Caco-2 (cell line): ENCODE measurements at regions of chr12 and their contacts with region 1.

Region 1: GRCh38 chr12:95762123-95762785 is 28.3 kb downstream of the NTN4 start:
- DNase-seq: peak; percentile 68 to 74
- H3K4me3 ChIP-seq: no peak overlapping the region
- H3K4me3 Mint-ChIP-seq: peak overlapping the region; percentile 48
- H3K27ac Mint-ChIP-seq: peak overlapping the region; percentile 71
- H3K4me1 ChIP-seq: peaks cover 72% of the 10 kb centered on the region
- H3K4me1 Mint-ChIP-seq: peaks cover 53% of the 10 kb centered on the region
- H3K27me3 ChIP-seq: no peaks in the 10 kb centered on the region
- H3K27me3 Mint-ChIP-seq: no peaks in the 10 kb centered on the region
- CTCF ChIP-seq: no peak

Region 2: DNA sequence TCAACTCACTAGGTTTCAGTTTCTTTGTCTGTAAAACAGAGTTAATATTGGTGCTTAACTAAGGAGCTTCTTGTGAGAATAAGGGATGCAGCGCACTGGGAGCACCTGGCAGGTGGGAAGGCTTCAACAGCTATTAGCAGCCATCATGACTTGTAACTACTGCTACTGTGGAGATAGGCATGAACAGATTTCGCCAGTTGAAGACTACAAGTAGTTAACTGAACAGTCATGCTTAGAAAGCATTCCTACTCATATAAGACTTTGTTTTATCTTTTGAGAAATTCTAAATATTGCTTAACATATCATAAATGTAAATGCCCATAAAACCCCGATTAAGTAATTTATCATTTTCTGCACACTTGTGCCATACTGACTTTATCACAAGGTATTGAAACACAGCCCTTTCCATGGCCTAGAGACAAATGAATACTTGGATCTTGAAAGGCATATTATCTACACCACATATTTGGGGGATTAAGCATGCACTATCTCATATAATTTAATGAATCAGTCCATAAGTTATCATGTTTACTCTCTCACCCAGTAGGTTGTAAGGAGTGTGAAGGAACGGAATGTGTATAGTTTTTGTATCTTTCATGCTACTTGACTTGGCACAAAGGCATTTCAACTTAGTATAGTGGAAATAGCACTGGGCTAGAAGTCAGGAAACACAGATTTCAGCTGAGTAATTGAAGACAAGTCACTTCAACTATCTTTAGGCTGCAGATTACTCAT is 12.2 kb after region 1 on chr12:
- CTCF ChIA-PET with region 1: no interaction called
- POLR2A ChIA-PET with region 1: no interaction called
- intact Hi-C with region 1: loop called (anchors 1 kb)
- DNase-seq: peak in 1 of 2 experiments; percentile 16
- H3K4me3 ChIP-seq: no peak overlapping the region
- H3K4me3 Mint-ChIP-seq: no peak overlapping the region
- H3K27ac Mint-ChIP-seq: no peak overlapping the region
- H3K4me1 ChIP-seq: peaks cover 29% of the 10 kb centered on the region
- H3K4me1 Mint-ChIP-seq: peaks cover 25% of the 10 kb centered on the region
- H3K27me3 ChIP-seq: no peaks in the 10 kb centered on the region
- H3K27me3 Mint-ChIP-seq: no peaks in the 10 kb centered on the region
- CTCF ChIP-seq: no peak

Region 3: DNA sequence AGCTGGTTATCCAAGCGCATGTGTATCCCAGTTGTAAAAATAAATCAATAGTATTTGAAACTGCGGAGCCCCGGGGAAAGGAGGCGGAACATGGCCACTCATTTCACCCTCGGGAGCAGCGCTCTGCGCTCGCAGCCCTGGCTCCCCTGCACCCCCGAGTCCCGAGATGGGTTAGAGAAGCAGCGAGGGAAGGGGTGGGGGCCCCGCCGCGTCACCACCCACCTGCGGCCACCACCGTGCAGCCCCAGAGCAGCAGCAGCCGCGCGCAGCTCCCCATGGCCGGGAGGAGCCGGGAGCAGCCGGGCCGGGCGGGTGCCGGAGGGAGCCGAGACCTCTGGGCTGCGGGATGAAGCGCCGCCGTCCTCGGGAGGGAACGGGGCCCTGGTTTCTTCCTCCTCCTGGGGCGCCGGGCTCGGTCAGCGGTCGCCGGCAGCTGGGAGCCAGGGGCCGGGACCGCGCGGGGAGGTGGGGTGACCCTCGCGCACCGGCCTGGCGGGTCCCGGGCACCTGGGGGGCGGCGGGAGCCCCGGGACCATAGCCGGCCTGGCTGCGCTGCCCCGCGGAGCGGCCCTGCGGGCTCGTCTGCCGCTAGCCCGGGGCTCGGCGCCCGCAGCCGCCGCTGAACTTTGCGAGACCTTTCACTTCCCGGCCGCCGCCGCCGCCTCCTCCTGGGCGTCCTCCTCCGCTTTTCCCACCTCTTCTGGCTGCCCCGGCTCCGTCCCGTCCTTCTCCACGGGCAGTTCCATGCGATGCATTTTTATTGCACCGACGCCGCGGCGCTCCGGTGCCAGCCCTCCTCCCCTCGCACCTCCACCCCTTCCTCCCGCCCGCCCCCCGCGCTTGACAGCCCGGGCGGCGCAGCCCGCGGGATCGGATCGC is 28.0 kb after region 1 on chr12 and contains the start of gene NTN4:
- CTCF ChIA-PET with region 1: no interaction called
- POLR2A ChIA-PET with region 1: interaction called, 3 read pairs
- intact Hi-C with region 1: loop called (anchors 1 kb)
- DNase-seq: peak; percentile 58
- H3K4me3 ChIP-seq: peak within 1 kb of the TSS; percentile 89
- H3K4me3 Mint-ChIP-seq: peak within 1 kb of the TSS; percentile 97
- H3K27ac Mint-ChIP-seq: peak within 1 kb of the TSS; percentile 88
- H3K4me1 ChIP-seq: peaks cover 52% of the 10 kb centered on the region
- H3K4me1 Mint-ChIP-seq: peaks cover 5% of the 10 kb centered on the region
- H3K27me3 ChIP-seq: no peaks in the 10 kb centered on the region
- H3K27me3 Mint-ChIP-seq: no peaks in the 10 kb centered on the region
- CTCF ChIP-seq: no peak
- total RNA-seq, gene NTN4: 54.1 and 55.0 TPM in 2 replicates

Region 4: DNA sequence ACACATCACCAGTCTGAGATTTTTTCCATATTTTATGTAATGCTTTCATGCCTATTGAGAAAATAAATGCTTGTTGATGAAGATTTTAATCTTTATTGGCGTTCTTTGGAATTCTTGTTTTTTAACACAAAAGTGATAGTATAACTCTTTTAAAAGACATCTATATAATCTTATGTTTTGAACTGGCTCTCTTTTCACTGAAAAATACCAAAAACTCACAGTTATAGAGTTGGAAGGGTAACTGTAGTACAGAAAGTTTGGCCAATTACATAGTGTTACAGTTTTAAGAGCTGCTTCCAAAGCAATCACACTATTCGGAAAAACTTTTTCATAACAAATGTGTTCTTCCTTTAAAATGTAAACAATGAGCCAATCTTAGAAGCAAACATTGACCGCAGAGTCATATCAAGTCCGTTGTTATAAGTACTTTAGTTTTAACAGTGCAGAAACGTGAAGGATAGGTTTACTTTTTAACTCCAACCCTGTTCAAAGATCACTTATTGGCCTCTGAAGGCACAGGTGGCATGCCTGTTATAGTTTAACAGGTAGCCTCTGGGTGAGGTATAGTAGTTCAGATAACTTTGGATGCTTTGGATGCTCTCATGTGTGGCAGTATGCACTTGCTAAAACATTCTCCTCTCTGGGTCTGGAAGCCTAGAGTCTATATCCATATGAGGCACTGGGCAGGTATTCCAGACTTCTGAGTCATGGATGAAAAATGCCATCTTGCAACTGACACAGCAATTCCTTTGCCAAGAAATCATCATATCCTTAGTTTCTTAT is 40.4 kb after region 1 on chr12:
- CTCF ChIA-PET with region 1: no interaction called
- POLR2A ChIA-PET with region 1: interaction called, 3 read pairs
- intact Hi-C with region 1: loop called (anchors 2 kb)
- DNase-seq: peak; percentile 78 to 80
- H3K4me3 ChIP-seq: no peak overlapping the region
- H3K4me3 Mint-ChIP-seq: peak overlapping the region; percentile 49
- H3K27ac Mint-ChIP-seq: peak overlapping the region; percentile 72
- H3K4me1 ChIP-seq: peaks cover 66% of the 10 kb centered on the region
- H3K4me1 Mint-ChIP-seq: peaks cover 35% of the 10 kb centered on the region
- H3K27me3 ChIP-seq: no peaks in the 10 kb centered on the region
- H3K27me3 Mint-ChIP-seq: no peaks in the 10 kb centered on the region
- CTCF ChIP-seq: no peak